Activated CD8-positive, alpha-beta T cell treated with anti-CD3 and anti-CD28 coated beads for 36 hours (primary cell): ENCODE measurements at regions of chr5 and their contacts with region 1.

Region 1: GRCh38 chr5:149576021-149576420 is 5.3 kb upstream of the ARHGEF37 start:
- DNase-seq: peak; percentile 37
- ATAC-seq: peak; percentile 92
- H3K4me3 Mint-ChIP-seq: no peak overlapping the region
- H3K27ac Mint-ChIP-seq: peak overlapping the region; percentile 90
- H3K4me1 Mint-ChIP-seq: peaks cover 19% of the 10 kb centered on the region
- H3K27me3 Mint-ChIP-seq: peaks cover 7% of the 10 kb centered on the region
- CTCF ChIP-seq: no peak

Region 2: DNA sequence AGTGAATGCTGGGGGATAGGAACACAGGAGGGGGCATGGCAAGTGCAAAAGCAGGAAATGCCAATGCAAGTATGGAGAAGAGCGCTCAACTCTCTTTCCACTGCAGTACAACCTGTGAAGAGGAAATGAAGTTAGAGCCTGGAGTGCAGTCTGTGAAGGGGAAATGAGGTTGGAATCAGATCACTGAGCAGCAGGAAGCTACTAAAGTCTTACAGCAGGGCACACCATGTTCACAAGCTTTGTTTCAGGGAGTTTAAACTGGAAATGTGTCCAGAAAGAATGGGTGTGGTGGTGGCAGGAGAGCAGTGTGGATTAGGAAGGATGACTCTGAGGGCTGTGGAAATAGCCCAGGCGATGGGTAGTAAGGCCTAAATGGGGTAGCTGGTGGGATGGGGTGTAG is 20.7 kb after region 1 on chr5:
- CTCF ChIA-PET with region 1: no interaction called
- POLR2A ChIA-PET with region 1: no interaction called
- intact Hi-C with region 1: no loop called
- DNase-seq: no peak
- ATAC-seq: no peak
- H3K4me3 Mint-ChIP-seq: no peak overlapping the region
- H3K27ac Mint-ChIP-seq: no peak overlapping the region
- H3K4me1 Mint-ChIP-seq: no peaks in the 10 kb centered on the region
- H3K27me3 Mint-ChIP-seq: peaks cover 2% of the 10 kb centered on the region
- CTCF ChIP-seq: no peak

Region 3: GRCh38 chr5:149618581-149619251 is 42.7 kb after region 1 on chr5:
- CTCF ChIA-PET with region 1: interaction called, 10 read pairs
- POLR2A ChIA-PET with region 1: no interaction called
- intact Hi-C with region 1: no loop called
- DNase-seq: peak; percentile 52
- ATAC-seq: peak; percentile 60
- H3K4me3 Mint-ChIP-seq: no peak overlapping the region
- H3K27ac Mint-ChIP-seq: no peak overlapping the region
- H3K4me1 Mint-ChIP-seq: peaks cover 7% of the 10 kb centered on the region
- H3K27me3 Mint-ChIP-seq: peaks cover 3% of the 10 kb centered on the region
- CTCF ChIP-seq: peak; percentile 60